ENCODE measurements at regions of chr22 and their contacts with region 1.

Region 1: DNA sequence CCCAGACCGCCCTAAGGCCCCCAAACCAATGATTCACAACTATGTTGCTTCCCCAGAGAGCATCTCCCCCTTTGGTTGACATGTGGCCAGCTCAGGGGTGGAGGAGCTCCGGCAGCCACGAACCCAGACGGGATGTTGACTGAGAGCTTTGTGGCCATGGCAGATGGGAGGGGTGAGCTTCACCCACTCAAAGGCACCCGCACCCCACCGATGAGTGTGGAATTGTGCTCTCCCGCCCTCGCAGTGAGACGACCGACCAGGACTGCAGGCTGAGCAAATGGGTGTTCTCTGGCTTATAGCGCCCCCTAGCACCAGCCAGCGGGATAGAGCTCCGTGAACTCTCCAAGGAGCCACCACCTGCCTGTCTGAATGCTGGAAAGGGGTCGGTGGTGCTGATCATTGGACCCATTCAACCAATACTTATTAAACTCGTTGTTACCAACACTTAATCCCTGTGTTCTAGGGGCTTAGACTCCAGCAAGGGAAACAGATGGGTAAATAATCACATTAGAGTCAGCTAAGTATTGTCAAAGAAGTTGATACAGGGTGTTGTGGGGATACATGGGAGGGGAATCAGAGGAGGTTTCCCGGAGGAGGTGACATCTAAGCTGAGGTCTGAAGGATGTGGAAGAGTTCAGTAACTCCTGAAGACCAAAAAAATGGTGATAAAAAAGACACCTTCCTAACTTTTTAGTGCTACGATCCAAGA is 4.5 kb upstream of the TIMP3 start:
- DNase-seq: peak; percentile 55
- H3K4me3 Mint-ChIP-seq: no peak overlapping the region
- H3K27ac Mint-ChIP-seq: no peak overlapping the region
- H3K4me1 Mint-ChIP-seq: peaks cover under 1% of the 10 kb centered on the region
- H3K27me3 Mint-ChIP-seq: no peaks in the 10 kb centered on the region
- CTCF ChIP-seq: peak; percentile 95

Region 2: GRCh38 chr22:32528984-32529982 is 267.7 kb before region 1 on chr22:
- CTCF ChIA-PET with region 1: interaction called, 195 read pairs
- POLR2A ChIA-PET with region 1: interaction called, 6 read pairs
- intact Hi-C with region 1: loop called (anchors 1 kb)
- DNase-seq: peak; percentile 76
- H3K4me3 Mint-ChIP-seq: no peak overlapping the region
- H3K27ac Mint-ChIP-seq: no peak overlapping the region
- H3K4me1 Mint-ChIP-seq: peaks cover 26% of the 10 kb centered on the region
- H3K27me3 Mint-ChIP-seq: no peaks in the 10 kb centered on the region
- CTCF ChIP-seq: peak; percentile 85

Region 3: GRCh38 chr22:32674925-32675825 is 121.8 kb before region 1 on chr22:
- CTCF ChIA-PET with region 1: interaction called, 10 read pairs
- POLR2A ChIA-PET with region 1: interaction called, 3 read pairs
- intact Hi-C with region 1: no loop called
- DNase-seq: no peak
- H3K4me3 Mint-ChIP-seq: no peak overlapping the region
- H3K27ac Mint-ChIP-seq: no peak overlapping the region
- H3K4me1 Mint-ChIP-seq: peaks cover 10% of the 10 kb centered on the region
- H3K27me3 Mint-ChIP-seq: peaks cover 9% of the 10 kb centered on the region
- CTCF ChIP-seq: no peak

Region 4: DNA sequence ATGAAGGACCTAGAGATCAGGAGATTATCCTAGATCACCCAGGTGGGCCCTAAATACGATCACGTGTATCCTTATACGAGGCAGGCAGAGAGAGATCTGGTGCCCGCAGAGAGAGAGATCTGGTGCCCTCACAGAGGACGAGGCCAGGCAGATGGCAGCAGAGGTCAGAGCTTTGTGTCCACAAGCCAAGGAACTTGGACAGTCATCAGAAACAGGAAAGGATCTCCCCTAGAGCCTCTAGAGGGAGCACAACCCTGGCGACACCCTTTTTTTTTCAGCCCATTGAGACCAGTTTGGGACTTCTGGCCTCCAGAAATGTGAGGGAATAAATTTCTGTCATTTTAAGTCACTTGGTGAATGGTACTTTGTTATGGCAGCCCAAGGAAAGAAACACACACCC is 21.1 kb before region 1 on chr22:
- CTCF ChIA-PET with region 1: interaction called, 15 read pairs
- POLR2A ChIA-PET with region 1: interaction called, 4 read pairs
- intact Hi-C with region 1: no loop called
- DNase-seq: peak; percentile 29
- H3K4me3 Mint-ChIP-seq: no peak overlapping the region
- H3K27ac Mint-ChIP-seq: no peak overlapping the region
- H3K4me1 Mint-ChIP-seq: peaks cover 11% of the 10 kb centered on the region
- H3K27me3 Mint-ChIP-seq: no peaks in the 10 kb centered on the region
- CTCF ChIP-seq: peak; percentile 23

Region 5: GRCh38 chr22:33000342-33001280 is 203.6 kb after region 1 on chr22:
- CTCF ChIA-PET with region 1: interaction called, 31 read pairs
- POLR2A ChIA-PET with region 1: interaction called, 4 read pairs
- intact Hi-C with region 1: loop called (anchors 1 kb)
- DNase-seq: peak; percentile 65
- H3K4me3 Mint-ChIP-seq: no peak overlapping the region
- H3K27ac Mint-ChIP-seq: peak overlapping the region; percentile 99
- H3K4me1 Mint-ChIP-seq: peaks cover 53% of the 10 kb centered on the region
- H3K27me3 Mint-ChIP-seq: no peaks in the 10 kb centered on the region
- CTCF ChIP-seq: peak; percentile 90

Region 6: DNA sequence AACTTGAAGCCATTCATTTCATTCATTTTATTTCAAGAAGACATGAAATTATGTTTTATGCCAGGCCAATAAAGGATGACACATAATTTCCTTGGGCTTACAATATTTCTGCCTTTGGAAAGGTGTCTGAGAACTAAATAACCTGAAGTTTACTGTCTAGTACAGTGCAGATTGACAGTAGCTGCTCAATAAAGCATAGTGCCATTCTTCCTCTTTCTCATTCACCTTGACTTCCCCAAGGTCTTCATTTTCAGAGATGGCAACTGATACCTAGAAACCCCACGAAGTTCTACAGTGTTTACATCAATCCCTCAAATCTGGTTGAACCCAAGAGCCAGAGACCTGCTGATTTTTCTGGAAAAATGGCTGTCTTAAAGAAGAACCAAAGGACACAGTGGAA is 405.4 kb after region 1 on chr22:
- CTCF ChIA-PET with region 1: interaction called, 5 read pairs
- POLR2A ChIA-PET with region 1: no interaction called
- intact Hi-C with region 1: loop called (anchors 5 kb)
- DNase-seq: no peak
- H3K4me3 Mint-ChIP-seq: no peak overlapping the region
- H3K27ac Mint-ChIP-seq: no peak overlapping the region
- H3K4me1 Mint-ChIP-seq: peaks cover 9% of the 10 kb centered on the region
- H3K27me3 Mint-ChIP-seq: peaks cover 43% of the 10 kb centered on the region
- CTCF ChIP-seq: no peak